Thyroid gland (tissue), 4 donors: ENCODE measurements at regions of chr19 and their contacts with region 1.

Region 1: GRCh38 chr19:13277104-13277809 is 127.0 kb downstream of the IER2 start:
- DNase-seq: peak; percentile 16 to 34
- H3K4me3 ChIP-seq: no peak overlapping the region
- H3K27ac ChIP-seq: no peak overlapping the region
- H3K4me1 ChIP-seq: no peaks in the 10 kb centered on the region
- H3K27me3 ChIP-seq: no peaks in the 10 kb centered on the region
- CTCF ChIP-seq: peak; percentile 28 to 68 (median 58)
- POLR2A ChIP-seq: no peak

Region 2: DNA sequence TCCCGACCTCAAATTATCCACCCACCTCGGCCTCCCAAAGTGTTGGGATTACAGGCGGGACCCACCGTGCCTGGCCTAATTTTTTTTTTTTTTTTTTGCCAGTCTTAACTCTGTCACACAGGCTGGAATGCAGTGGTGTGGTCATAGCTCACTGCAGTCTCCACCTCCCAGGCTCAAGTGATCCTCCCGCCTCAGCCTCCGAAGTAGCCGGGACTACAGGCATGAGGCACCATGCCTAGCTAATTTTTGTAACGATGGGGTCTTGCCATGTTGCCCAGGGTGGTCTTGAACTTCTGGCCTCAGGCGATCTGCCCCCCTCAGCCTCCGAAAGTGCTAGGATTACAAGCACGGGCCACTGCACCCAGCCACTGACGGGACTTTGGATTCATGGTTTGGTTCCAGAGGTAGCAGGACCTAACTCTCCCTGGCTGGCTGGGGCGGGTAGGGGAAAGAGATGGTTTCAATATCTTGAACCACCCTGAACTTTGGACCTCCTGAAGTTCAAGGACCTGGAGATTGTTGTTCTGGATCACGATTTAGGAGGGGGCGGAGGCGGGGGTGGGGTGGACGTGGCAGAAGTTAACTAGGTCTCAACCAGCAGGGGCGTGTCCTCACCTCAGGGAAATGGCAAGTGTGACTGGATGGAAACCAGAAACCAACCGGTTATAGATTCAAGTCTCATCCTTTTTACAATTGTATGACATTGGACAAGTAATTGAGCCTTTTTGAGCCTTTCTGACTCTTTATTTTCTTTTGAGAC is 86.3 kb before region 1 on chr19:
- intact Hi-C with region 1: no loop called
- DNase-seq: no peak
- H3K4me3 ChIP-seq: no peak overlapping the region
- H3K27ac ChIP-seq: no peak overlapping the region
- H3K4me1 ChIP-seq: no peaks in the 10 kb centered on the region
- H3K27me3 ChIP-seq: no peaks in the 10 kb centered on the region
- CTCF ChIP-seq: no peak
- POLR2A ChIP-seq: no peak

Region 3: GRCh38 chr19:13588957-13589833 is 311.9 kb after region 1 on chr19:
- intact Hi-C with region 1: loop called (anchors 5 kb)
- DNase-seq: peak; percentile 58 to 63
- H3K4me3 ChIP-seq: no peak overlapping the region
- H3K27ac ChIP-seq: no peak overlapping the region
- H3K4me1 ChIP-seq: no peaks in the 10 kb centered on the region
- H3K27me3 ChIP-seq: no peaks in the 10 kb centered on the region
- CTCF ChIP-seq: peak; percentile 64 to 98 (median 80)
- POLR2A ChIP-seq: no peak

Region 4: DNA sequence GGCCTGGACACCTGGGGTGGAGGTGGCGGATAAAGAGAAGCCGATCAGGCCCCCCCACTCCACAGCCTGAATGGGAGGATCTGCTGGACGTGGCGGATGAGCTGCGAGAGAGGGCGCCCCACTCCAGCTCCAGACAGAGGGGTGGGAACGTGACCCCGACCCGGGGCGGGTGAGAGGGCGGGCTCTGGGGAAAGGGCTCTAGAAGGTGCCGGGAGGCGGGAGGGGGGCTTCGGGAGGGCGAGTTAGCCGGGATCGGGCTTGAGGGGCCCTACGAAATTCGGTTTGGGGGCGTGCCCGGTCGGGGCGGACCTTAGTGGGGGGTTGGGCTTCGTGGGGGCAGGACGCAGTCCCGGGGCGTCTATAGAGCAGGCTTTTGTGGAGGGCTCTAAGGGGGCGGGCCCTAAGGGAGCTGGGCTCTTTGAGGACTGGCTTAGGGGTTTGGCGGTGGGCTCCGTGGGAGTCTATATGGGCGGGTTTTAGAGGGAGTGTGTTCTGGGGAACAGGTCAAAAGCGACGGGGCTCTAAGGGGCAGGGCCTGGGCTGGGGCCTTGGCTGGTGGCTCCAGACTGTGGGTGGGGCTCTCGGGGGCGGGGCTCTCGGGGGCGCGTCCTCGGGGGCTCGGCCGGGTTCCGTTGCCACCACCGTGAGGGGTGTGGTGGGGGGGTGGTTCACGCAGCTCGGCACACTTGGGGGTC is 595.6 kb after region 1 on chr19:
- intact Hi-C with region 1: loop called (anchors 10 kb)
- DNase-seq: peak; percentile 37 to 47
- H3K4me3 ChIP-seq: peak overlapping the region in 2 of 3 donors; percentile 8 to 38
- H3K27ac ChIP-seq: no peak overlapping the region
- H3K4me1 ChIP-seq: peaks cover 0 to 3% of the 10 kb centered on the region in 2 donors
- H3K27me3 ChIP-seq: no peaks in the 10 kb centered on the region
- CTCF ChIP-seq: peak in 2 of 6 experiments; percentile 8 to 26
- POLR2A ChIP-seq: no peak